Breast epithelium (tissue), 4 donors: ENCODE measurements at regions of chr6 and their contacts with region 1.

Region 1: DNA sequence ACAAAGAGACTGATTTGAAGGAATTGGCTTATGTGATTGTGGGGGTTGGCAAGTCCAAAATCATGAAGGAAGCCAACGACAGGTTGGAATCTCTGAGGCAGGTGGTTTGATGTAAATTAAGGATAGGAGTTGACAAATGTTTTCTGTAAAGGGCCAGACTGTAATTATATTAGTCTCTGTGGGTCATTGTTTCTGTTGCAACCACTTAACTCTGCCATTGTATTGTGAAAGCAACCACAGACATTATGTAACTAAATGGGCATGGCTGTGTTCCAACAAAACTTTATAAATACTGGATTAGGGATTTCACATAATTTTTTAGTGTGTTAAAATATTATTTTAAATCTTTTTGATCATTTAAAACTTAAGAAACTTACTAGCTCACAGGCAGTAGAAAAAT is 199.2 kb upstream of the MYLIP start:
- DNase-seq: no peak
- H3K4me3 ChIP-seq: no peak overlapping the region
- H3K27ac ChIP-seq: no peak overlapping the region
- H3K4me1 ChIP-seq: no peaks in the 10 kb centered on the region
- H3K27me3 ChIP-seq: no peaks in the 10 kb centered on the region
- CTCF ChIP-seq: no peak
- POLR2A ChIP-seq: no peak

Region 2: DNA sequence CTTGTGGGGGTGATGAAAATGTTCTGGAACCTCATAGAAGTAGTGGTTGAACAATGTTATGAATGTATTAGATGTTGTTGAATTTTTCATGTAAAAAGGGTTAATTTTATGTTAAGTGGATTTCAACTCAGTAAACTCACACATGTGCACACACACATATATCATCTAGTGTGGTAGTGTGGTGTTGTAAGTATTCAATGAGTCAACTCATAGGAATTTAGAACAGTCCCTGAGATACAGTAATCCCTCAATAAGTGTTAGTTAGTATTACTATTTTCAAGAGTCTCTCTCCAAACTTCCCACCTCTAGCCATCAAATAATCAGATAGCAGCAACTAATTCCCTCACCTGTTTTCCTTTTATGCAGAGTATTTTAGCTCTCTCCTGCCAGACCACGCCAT is 1246.9 kb before region 1 on chr6:
- intact Hi-C with region 1: no loop called
- DNase-seq: no peak
- H3K4me3 ChIP-seq: no peak overlapping the region
- H3K27ac ChIP-seq: no peak overlapping the region
- H3K4me1 ChIP-seq: no peaks in the 10 kb centered on the region
- H3K27me3 ChIP-seq: no peaks in the 10 kb centered on the region
- CTCF ChIP-seq: no peak
- POLR2A ChIP-seq: no peak

Region 3: GRCh38 chr6:16602035-16602434 is 672.4 kb after region 1 on chr6:
- intact Hi-C with region 1: loop called (anchors 5 kb)
- DNase-seq: no peak
- H3K4me3 ChIP-seq: no peak overlapping the region
- H3K27ac ChIP-seq: no peak overlapping the region
- H3K4me1 ChIP-seq: no peaks in the 10 kb centered on the region
- H3K27me3 ChIP-seq: no peaks in the 10 kb centered on the region
- CTCF ChIP-seq: no peak
- POLR2A ChIP-seq: no peak